Prostate gland (tissue), 2 donors: ENCODE measurements at regions of chr3 and their contacts with region 1.

Region 1: GRCh38 chr3:159837725-159838124 is 150.9 kb upstream of the IL12A start:
- DNase-seq: no peak
- H3K4me3 ChIP-seq: no peak overlapping the region
- H3K27ac ChIP-seq: peak overlapping the region in 1 of 2 donors; percentile 16
- H3K4me1 ChIP-seq: no peaks in the 10 kb centered on the region
- H3K27me3 ChIP-seq: no peaks in the 10 kb centered on the region
- CTCF ChIP-seq: no peak
- POLR2A ChIP-seq: no peak

Region 2: DNA sequence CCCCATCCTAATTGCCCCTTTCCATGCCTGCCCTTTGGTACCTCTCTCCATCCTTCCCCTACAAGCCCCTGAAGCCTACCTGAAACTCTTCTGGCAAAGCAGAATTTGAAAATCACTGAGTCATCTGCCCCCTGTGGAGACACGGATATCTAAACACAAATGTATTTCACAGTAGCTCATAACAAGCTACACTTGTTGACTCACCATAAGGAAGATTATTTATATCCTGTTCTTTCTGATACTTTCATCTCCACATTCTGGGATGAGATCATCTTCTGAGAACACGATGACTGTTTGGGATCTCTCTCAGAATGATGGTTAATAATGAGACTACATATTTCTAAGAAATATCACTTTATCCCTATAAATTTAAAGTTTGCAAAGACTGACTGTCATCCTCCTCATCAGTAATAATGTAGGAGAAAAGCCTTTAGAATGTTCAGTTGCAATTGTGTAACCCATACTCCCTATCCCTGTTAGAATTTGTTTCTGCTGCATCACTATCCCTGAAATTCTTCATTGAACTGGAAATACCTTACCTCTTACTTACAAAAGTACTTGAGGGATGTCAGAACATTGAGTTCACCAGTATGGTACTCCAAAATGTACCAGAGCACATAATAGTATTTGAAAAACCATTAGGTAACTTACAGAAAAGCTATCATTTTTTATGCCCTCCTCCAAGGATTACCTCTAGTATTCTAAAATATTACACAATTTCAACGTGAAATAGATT is 34.8 kb after region 1 on chr3:
- intact Hi-C with region 1: loop called (anchors 2 kb)
- DNase-seq: no peak
- H3K4me3 ChIP-seq: no peak overlapping the region
- H3K27ac ChIP-seq: no peak overlapping the region
- H3K4me1 ChIP-seq: no peaks in the 10 kb centered on the region
- H3K27me3 ChIP-seq: no peaks in the 10 kb centered on the region
- CTCF ChIP-seq: peak in 1 of 4 experiments; percentile 22
- POLR2A ChIP-seq: no peak